Naive thymus-derived CD4-positive, alpha-beta T cell (primary cell): ENCODE measurements at regions of chr22 and their contacts with region 1.

Region 1: DNA sequence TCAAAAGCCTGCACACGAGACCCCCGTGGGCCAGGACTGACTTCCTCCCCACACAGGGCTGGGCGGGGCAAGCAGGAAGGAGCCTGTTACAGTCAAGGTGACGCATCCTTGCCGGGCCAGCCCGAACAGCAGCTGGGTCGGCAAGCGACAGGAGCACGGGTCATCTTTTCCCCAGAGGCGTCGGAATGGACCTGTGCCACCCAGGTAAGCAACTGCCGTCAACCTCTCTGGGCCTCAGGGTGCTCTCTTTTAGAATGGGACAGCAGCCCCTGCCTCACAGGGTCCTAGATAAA is at the start of gene CYTH4:
- DNase-seq: peak; percentile 48 to 76 (median 67)
- ATAC-seq: peak; percentile 78
- H3K4me3 ChIP-seq: peak within 1 kb of the TSS; percentile 89
- H3K4me3 Mint-ChIP-seq: peak within 1 kb of the TSS; percentile 90 to 98 (median 96)
- H3K27ac ChIP-seq: peak within 1 kb of the TSS; percentile 85
- H3K27ac Mint-ChIP-seq: peak within 1 kb of the TSS; percentile 90 to 99 (median 98)
- H3K4me1 ChIP-seq: peaks cover 16 to 27% of the 10 kb centered on the region in 2 donors
- H3K4me1 Mint-ChIP-seq: peaks cover 41 to 83% (median 62%) of the 10 kb centered on the region in 7 donors
- H3K27me3 ChIP-seq: no peaks in the 10 kb centered on the region
- H3K27me3 Mint-ChIP-seq: no peaks in the 10 kb centered on the region
- total RNA-seq, gene CYTH4: 123 to 227 (median 214) TPM

Region 2: GRCh38 chr22:36528795-36529751 is 753.3 kb before region 1 on chr22 and contains the start of gene EIF3D:
- CTCF ChIA-PET with region 1: no interaction called
- POLR2A ChIA-PET with region 1: no interaction called
- intact Hi-C with region 1: no loop called
- DNase-seq: peak; percentile 93 to 100 (median 99)
- ATAC-seq: peak; percentile 94
- H3K4me3 ChIP-seq: peak within 1 kb of the TSS; percentile 84
- H3K4me3 Mint-ChIP-seq: peak within 1 kb of the TSS; percentile 78 to 98 (median 96)
- H3K27ac ChIP-seq: peak within 1 kb of the TSS; percentile 92
- H3K27ac Mint-ChIP-seq: peak within 1 kb of the TSS; percentile 94 to 99 (median 98)
- H3K4me1 ChIP-seq: peaks cover 4 to 12% of the 10 kb centered on the region in 2 donors
- H3K4me1 Mint-ChIP-seq: peaks cover 11 to 23% (median 21%) of the 10 kb centered on the region in 7 donors
- H3K27me3 ChIP-seq: no peaks in the 10 kb centered on the region
- H3K27me3 Mint-ChIP-seq: peaks cover 0 to 4% (median 0%) of the 10 kb centered on the region in 5 donors
- total RNA-seq, gene EIF3D: 220 to 257 (median 232) TPM

Region 3: GRCh38 chr22:37295213-37295886 is 13.0 kb after region 1 on chr22:
- CTCF ChIA-PET with region 1: interaction called, 4 read pairs
- POLR2A ChIA-PET with region 1: interaction called, 29 read pairs
- intact Hi-C with region 1: no loop called
- DNase-seq: no peak
- ATAC-seq: no peak
- H3K4me3 ChIP-seq: no peak overlapping the region
- H3K4me3 Mint-ChIP-seq: peak overlapping the region in 7 of 10 donors; percentile 3 to 64 (median 25)
- H3K27ac ChIP-seq: peak overlapping the region; percentile 61
- H3K27ac Mint-ChIP-seq: peak overlapping the region; percentile 70 to 96 (median 87)
- H3K4me1 ChIP-seq: peaks cover 13 to 41% of the 10 kb centered on the region in 2 donors
- H3K4me1 Mint-ChIP-seq: peaks cover 40 to 84% (median 80%) of the 10 kb centered on the region in 7 donors
- H3K27me3 ChIP-seq: no peaks in the 10 kb centered on the region
- H3K27me3 Mint-ChIP-seq: no peaks in the 10 kb centered on the region

Region 4: GRCh38 chr22:37300551-37301017 is 18.3 kb after region 1 on chr22:
- CTCF ChIA-PET with region 1: interaction called, 4 read pairs
- POLR2A ChIA-PET with region 1: interaction called, 29 read pairs
- intact Hi-C with region 1: no loop called
- DNase-seq: peak in 8 of 9 donors; percentile 37 to 54 (median 47)
- ATAC-seq: peak; percentile 48
- H3K4me3 ChIP-seq: peak overlapping the region; percentile 21
- H3K4me3 Mint-ChIP-seq: peak overlapping the region; percentile 60 to 88 (median 76)
- H3K27ac ChIP-seq: peak overlapping the region; percentile 77
- H3K27ac Mint-ChIP-seq: peak overlapping the region; percentile 93 to 99 (median 96)
- H3K4me1 ChIP-seq: peaks cover 26 to 63% of the 10 kb centered on the region in 2 donors
- H3K4me1 Mint-ChIP-seq: peaks cover 47 to 83% (median 78%) of the 10 kb centered on the region in 7 donors
- H3K27me3 ChIP-seq: no peaks in the 10 kb centered on the region
- H3K27me3 Mint-ChIP-seq: no peaks in the 10 kb centered on the region

Region 5: GRCh38 chr22:37309211-37310074 is 27.1 kb after region 1 on chr22:
- CTCF ChIA-PET with region 1: interaction called, 5 read pairs
- POLR2A ChIA-PET with region 1: interaction called, 57 read pairs
- intact Hi-C with region 1: no loop called
- DNase-seq: peak in 8 of 9 donors; percentile 46 to 72 (median 67)
- ATAC-seq: peak; percentile 49
- H3K4me3 ChIP-seq: peak overlapping the region; percentile 34
- H3K4me3 Mint-ChIP-seq: peak overlapping the region; percentile 75 to 94 (median 84)
- H3K27ac ChIP-seq: peak overlapping the region; percentile 84
- H3K27ac Mint-ChIP-seq: peak overlapping the region; percentile 89 to 100 (median 97)
- H3K4me1 ChIP-seq: peaks cover 61 to 72% of the 10 kb centered on the region in 2 donors
- H3K4me1 Mint-ChIP-seq: peaks cover 63 to 87% (median 83%) of the 10 kb centered on the region in 7 donors
- H3K27me3 ChIP-seq: no peaks in the 10 kb centered on the region
- H3K27me3 Mint-ChIP-seq: no peaks in the 10 kb centered on the region